SK-N-SH (cell line): ENCODE measurements at regions of chr3 and their contacts with region 1.

Region 1: DNA sequence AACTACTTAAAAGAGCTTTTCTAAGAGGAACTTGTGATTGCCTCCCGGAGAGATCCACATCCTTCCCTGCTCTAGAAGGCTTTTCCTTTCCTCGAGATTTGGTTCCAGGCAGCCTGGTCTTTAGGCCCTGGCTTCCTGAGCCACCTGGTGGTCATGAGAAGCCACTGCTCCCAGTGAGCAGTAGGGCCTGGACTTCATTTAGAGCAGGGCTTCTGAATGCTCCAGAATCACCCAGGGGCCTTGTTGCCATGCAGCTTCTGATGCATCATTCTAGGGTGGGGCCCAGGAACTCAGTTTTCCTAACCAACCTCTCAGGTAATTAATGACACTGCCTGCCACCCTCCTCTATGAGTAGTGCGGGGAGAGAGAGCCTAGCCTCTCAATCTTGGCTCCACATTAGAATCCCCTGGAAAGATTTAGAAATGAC is 29.6 kb downstream of the PSMD6 start:
- DNase-seq: peak; percentile 82
- H3K4me3 ChIP-seq: no peak overlapping the region; a peak in 1 of 4 replicates
- H3K27ac ChIP-seq: no peak overlapping the region
- H3K4me1 ChIP-seq: no peaks in the 10 kb centered on the region
- H3K27me3 ChIP-seq: no peaks in the 10 kb centered on the region
- CTCF ChIP-seq: peak; percentile 90
- EP300 ChIP-seq: no peak
- RAD21 ChIP-seq: peak; percentile 90

Region 2: GRCh38 chr3:63937661-63938651 is 55.7 kb before region 1 on chr3:
- CTCF ChIA-PET with region 1: interaction called, 10 read pairs
- POLR2A ChIA-PET with region 1: no interaction called
- DNase-seq: no peak
- H3K4me3 ChIP-seq: no peak overlapping the region
- H3K27ac ChIP-seq: no peak overlapping the region
- H3K4me1 ChIP-seq: peaks cover 0 to 2% of the 10 kb centered on the region in 2 experiments; a peak in 1 of 4 replicates
- H3K27me3 ChIP-seq: no peaks in the 10 kb centered on the region
- CTCF ChIP-seq: no peak
- EP300 ChIP-seq: no peak
- RAD21 ChIP-seq: no peak

Region 3: DNA sequence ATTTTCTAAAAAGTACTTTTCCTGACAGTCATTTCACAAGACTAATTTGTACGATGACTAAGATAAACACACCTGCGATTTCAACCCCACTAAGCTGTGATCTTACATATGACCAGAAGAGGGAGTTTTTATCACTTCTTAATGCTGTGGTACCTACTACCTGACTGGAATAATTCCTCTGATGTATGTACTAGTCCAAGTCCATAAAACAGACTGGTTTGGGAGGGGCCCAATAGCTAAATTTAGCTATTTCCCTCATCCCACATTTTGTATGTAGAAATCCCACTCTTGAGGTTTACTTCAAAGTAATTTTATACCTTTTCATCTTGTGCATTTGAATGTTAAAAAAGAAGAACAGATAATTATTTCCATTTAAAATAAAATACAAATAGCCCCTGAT is 31.8 kb before region 1 on chr3:
- CTCF ChIA-PET with region 1: interaction called, 118 read pairs
- POLR2A ChIA-PET with region 1: no interaction called
- DNase-seq: peak; percentile 39
- H3K4me3 ChIP-seq: no peak overlapping the region
- H3K27ac ChIP-seq: no peak overlapping the region
- H3K4me1 ChIP-seq: peaks cover 17 to 24% of the 10 kb centered on the region in 2 experiments; a peak in 3 of 4 replicates
- H3K27me3 ChIP-seq: no peaks in the 10 kb centered on the region
- CTCF ChIP-seq: peak; percentile 70
- EP300 ChIP-seq: no peak
- RAD21 ChIP-seq: peak; percentile 52

Region 4: GRCh38 chr3:63968612-63969350 is 24.9 kb before region 1 on chr3:
- CTCF ChIA-PET with region 1: interaction called, 118 read pairs
- POLR2A ChIA-PET with region 1: no interaction called
- DNase-seq: no peak
- H3K4me3 ChIP-seq: no peak overlapping the region
- H3K27ac ChIP-seq: peak overlapping the region in 1 of 2 experiments; percentile 1; a peak in 1 of 4 replicates
- H3K4me1 ChIP-seq: peaks cover 11 to 24% of the 10 kb centered on the region in 2 experiments; a peak in 3 of 4 replicates
- H3K27me3 ChIP-seq: no peaks in the 10 kb centered on the region
- CTCF ChIP-seq: no peak
- EP300 ChIP-seq: no peak
- RAD21 ChIP-seq: no peak

Region 5: GRCh38 chr3:63975723-63976122 is 17.9 kb before region 1 on chr3:
- CTCF ChIA-PET with region 1: interaction called, 25 read pairs
- POLR2A ChIA-PET with region 1: no interaction called
- DNase-seq: no peak
- H3K4me3 ChIP-seq: no peak overlapping the region
- H3K27ac ChIP-seq: no peak overlapping the region
- H3K4me1 ChIP-seq: peaks cover 0 to 14% of the 10 kb centered on the region in 2 experiments; a peak in 2 of 4 replicates
- H3K27me3 ChIP-seq: no peaks in the 10 kb centered on the region
- CTCF ChIP-seq: no peak
- EP300 ChIP-seq: no peak
- RAD21 ChIP-seq: no peak

Region 6: DNA sequence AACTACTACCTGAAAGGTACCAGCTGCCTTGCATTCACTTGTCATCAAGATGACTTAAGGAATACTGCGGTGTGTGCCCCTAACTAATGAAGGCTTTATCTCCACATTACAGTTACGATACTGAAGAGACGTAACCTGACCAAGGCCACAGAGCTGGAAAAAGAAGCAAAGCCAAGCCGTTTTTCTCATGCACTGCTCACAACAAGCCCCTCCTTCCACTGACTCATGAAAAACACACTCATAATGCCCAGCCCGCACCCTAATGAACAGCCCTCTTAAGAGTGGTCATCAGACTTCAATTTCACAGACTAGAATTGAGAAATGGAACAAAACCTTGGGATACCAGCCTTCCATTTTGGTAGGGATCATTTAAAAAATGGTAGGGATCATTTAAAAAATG is 18.0 kb after region 1 on chr3:
- CTCF ChIA-PET with region 1: interaction called, 22 read pairs
- POLR2A ChIA-PET with region 1: no interaction called
- DNase-seq: no peak
- H3K4me3 ChIP-seq: no peak overlapping the region
- H3K27ac ChIP-seq: peak overlapping the region in 1 of 2 experiments; percentile 23; a peak in 1 of 4 replicates
- H3K4me1 ChIP-seq: no peaks in the 10 kb centered on the region
- H3K27me3 ChIP-seq: no peaks in the 10 kb centered on the region
- CTCF ChIP-seq: no peak
- EP300 ChIP-seq: no peak
- RAD21 ChIP-seq: no peak

Region 7: DNA sequence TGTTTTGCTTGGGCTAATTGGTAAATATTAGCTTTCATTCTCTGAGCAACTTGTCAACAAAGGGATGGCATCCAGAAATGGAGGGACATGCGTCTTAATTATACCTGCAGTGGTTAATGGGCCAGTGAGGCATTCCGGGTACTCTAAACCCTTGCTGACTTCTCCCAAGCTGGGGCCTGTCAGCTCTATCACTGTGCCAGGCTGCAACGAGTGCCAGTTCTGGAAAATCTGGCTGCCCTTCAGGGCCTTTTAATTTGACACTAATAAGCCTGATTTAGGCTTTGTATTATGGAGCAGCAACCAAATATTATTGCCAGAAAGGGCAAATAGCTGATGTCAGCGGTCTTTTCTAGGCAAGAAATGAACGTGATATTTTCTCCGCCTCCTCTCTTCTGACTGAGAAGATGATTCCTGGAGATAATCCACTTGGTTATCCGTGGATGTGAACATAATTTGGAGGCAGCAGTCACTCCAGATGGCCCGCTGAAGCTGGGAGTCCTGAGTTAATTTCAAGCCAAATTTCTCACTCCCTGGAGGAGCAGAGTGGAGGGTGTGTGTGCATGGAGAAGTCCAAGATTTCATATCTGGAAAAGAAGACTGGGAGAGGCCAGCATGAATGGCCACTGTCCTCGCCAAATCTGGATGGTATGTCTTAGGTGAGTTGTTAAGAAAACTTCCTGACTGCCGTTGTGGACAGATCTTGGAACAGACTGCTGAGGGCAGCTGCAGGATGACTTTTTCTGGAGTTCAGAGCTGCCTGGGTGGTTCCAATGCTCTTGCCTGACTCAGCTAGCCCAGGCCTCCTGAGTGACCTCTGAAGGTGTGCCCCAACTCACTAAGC is 74.1 kb after region 1 on chr3:
- CTCF ChIA-PET with region 1: no interaction called
- POLR2A ChIA-PET with region 1: no interaction called
- DNase-seq: no peak
- H3K4me3 ChIP-seq: no peak overlapping the region
- H3K27ac ChIP-seq: no peak overlapping the region; a peak in 1 of 4 replicates
- H3K4me1 ChIP-seq: peaks cover 0 to 9% of the 10 kb centered on the region in 2 experiments; a peak in 2 of 4 replicates
- H3K27me3 ChIP-seq: no peaks in the 10 kb centered on the region
- CTCF ChIP-seq: no peak
- EP300 ChIP-seq: no peak
- RAD21 ChIP-seq: no peak